ENCODE measurements at regions of chr2 and their contacts with region 1.

Region 1: DNA sequence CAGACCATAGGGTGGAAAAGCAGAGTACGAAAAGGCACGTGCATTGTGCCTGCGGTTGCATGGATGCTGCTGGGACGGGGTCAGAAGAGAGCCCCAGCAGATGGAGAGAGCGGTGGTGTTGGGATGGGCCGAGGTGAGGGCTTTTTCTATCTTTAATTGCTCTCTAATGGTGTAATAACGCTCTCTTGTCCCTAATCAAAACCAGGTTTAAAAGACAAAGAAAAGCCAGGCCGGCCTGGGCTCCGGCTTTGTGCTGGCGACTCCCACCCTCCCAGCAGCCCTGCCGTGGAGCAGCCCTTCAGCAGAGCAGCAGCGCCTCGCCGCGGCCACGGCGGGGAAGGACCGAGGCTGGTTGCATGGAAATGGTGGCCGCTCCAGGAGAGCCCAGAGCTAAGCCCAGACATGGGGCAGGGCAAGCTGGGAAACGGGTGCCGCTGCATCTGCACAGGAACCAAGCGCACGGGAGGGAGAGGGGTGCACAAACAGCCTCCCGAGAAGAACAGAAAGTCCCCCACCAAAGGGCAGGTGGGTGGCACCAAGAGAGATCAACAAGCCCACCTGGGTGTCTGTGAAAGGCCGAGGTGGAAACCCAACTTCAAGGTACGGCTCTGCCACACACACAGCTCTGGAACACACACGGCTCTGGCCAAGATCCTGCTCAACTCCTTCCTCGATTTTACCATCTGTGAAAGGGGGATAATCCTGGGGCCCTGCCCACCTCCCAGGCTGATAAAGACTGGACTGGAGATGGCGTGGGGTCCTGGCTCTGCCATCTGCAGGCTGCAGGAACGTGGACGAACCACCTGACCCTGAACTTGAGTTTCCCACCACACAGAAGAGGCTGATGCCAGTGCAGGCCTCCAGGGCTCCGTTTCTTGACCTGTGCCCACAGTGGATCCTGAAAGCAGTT is 15.0 kb downstream of the HS1BP3 start:
- DNase-seq: peak; percentile 78
- H3K4me3 Mint-ChIP-seq: no peak overlapping the region
- H3K27ac Mint-ChIP-seq: peak overlapping the region; percentile 2
- H3K4me1 Mint-ChIP-seq: peaks cover 13% of the 10 kb centered on the region
- H3K27me3 Mint-ChIP-seq: no peaks in the 10 kb centered on the region
- CTCF ChIP-seq: peak; percentile 98

Region 2: DNA sequence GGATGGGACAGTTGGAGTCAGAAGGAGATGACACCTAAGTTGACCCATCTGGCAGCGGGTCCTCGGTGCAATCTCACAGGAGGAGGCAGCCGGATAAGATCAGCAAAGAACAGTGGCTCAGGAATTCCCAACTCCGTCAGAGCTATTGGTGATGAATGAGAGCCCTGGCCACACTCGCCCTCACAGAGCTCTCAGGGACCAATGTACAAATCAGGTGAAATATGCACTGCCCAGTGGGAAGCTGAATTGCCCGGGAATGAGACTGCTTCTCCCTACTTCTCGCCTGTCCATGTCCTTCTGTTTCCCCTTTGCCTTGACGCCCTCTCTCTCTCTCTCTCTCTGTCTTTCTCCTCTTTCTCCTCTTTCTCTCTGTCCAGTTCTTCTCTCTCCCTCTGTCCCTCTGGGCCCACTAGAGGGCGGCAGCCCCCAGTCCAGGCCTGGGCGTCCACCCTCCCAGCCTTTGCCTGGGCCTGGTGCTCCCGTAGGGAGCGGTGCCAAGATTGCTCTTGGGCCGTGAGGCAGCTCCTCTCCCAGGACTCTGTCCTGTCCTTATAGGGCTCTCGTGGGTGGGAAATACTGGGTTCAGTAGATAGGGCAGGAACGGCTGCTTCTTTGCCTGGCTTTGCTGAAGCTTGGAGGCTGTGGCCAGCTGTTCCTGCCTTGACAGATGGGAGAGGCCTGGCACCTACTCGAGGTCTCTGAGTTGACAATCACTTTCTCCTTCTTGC is 257.0 kb before region 1 on chr2:
- CTCF ChIA-PET with region 1: interaction called, 10 read pairs
- POLR2A ChIA-PET with region 1: interaction called, 5 read pairs
- intact Hi-C with region 1: no loop called
- DNase-seq: peak; percentile 83
- H3K4me3 Mint-ChIP-seq: no peak overlapping the region
- H3K27ac Mint-ChIP-seq: no peak overlapping the region
- H3K4me1 Mint-ChIP-seq: no peaks in the 10 kb centered on the region
- H3K27me3 Mint-ChIP-seq: no peaks in the 10 kb centered on the region
- CTCF ChIP-seq: peak; percentile 48

Region 3: DNA sequence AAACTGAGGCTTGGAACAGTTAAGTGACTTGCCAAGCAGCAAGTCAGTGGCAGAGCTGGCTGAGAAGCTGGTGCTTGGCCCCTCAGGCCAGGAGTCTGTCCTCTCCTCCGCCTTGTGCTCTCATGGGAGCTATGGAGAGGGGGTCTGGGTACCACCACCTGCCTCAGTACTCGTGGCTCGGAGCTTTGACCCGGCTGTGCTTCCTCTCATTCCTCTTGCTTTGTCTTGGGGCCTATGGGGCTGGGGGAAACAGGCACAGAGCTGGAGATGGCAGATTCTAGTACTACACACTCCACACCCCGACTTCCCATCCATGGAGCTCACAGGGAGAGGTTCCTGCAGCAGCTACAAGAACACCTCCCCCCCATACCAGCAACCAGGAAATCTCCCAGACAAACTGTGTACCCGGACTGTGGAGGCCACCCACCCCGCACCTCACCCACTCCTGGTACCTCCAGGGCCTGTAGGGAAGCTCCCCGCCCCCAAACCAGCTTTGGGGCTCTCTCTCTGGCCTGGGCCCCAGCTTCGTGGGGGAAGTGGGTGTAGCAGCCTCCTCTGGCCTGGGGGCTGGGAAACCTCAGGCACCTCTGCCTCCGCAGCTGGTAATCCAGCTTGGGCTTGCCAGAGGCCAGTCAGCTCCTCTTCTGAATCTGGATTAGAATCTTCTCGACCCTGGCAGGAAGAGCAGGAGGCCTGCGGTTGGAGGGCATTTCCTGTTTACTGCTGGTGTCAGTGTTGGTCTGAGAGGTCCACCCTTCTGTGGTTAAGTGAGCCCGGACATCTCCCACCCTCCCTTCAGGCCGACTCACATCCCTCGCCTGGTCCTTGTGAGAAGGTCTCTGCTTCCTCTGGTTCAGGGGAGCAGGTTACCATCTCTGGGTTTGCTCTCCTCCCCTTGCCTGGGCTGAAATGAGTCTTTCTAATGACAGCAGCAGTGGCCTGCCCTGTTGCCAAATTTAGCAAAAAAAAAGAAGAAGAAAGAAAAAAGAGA is 211.3 kb before region 1 on chr2:
- CTCF ChIA-PET with region 1: interaction called, 15 read pairs
- POLR2A ChIA-PET with region 1: no interaction called
- intact Hi-C with region 1: no loop called
- DNase-seq: peak; percentile 61
- H3K4me3 Mint-ChIP-seq: no peak overlapping the region
- H3K27ac Mint-ChIP-seq: peak overlapping the region; percentile 67
- H3K4me1 Mint-ChIP-seq: peaks cover 47% of the 10 kb centered on the region
- H3K27me3 Mint-ChIP-seq: no peaks in the 10 kb centered on the region
- CTCF ChIP-seq: no peak

Region 4: GRCh38 chr2:20452551-20452950 is 183.4 kb before region 1 on chr2:
- CTCF ChIA-PET with region 1: interaction called, 78 read pairs
- POLR2A ChIA-PET with region 1: interaction called, 11 read pairs
- intact Hi-C with region 1: loop called (anchors 1 kb)
- DNase-seq: peak; percentile 91
- H3K4me3 Mint-ChIP-seq: no peak overlapping the region
- H3K27ac Mint-ChIP-seq: no peak overlapping the region
- H3K4me1 Mint-ChIP-seq: no peaks in the 10 kb centered on the region
- H3K27me3 Mint-ChIP-seq: no peaks in the 10 kb centered on the region
- CTCF ChIP-seq: peak; percentile 52

Region 5: GRCh38 chr2:20600756-20601325 is 35.1 kb before region 1 on chr2:
- CTCF ChIA-PET with region 1: interaction called, 19 read pairs
- POLR2A ChIA-PET with region 1: interaction called, 3 read pairs
- intact Hi-C with region 1: loop called (anchors 2 kb)
- DNase-seq: no peak
- H3K4me3 Mint-ChIP-seq: no peak overlapping the region
- H3K27ac Mint-ChIP-seq: no peak overlapping the region
- H3K4me1 Mint-ChIP-seq: peaks cover 24% of the 10 kb centered on the region
- H3K27me3 Mint-ChIP-seq: no peaks in the 10 kb centered on the region
- CTCF ChIP-seq: peak; percentile 30

Measured in MCF 10A (cell line).